ENCODE measurements at regions of chr1 and their contacts with region 1.

Region 1: DNA sequence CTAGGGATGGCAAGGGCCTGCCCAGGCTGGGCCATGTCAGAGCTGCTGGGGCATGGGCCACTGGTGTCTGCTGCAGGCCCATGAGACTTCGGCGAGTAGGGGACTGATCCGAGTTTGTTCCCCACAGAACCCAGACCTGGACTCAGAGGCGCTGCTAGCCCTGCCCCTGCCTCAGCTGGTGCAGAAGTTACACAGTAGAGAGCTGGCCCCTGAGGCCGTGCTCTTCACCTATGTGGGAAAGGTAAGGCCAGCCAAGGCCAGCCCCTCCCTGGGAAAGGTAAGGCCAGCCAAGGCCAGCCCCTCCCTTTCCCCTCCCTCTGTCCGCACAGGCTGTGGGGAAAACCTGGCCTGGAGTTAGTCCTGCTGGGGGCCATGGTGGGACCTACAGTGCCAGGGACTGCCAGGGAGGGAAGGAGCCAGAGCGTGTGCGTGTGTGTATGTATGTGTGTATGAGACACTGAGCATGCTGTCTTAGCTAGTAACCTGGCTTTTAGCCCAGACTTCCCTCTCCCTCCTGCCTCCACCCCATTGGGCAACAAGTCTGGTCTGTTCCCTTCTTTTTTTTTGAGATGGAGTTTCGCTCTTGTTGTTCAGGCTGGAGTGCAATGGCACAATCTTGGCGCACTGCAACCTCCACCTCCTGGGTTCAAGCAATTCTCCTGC is 8.0 kb downstream of the FAAH start:
- DNase-seq: peak in 1 of 2 experiments; percentile 85
- H3K4me3 ChIP-seq: no peak overlapping the region
- H3K27ac ChIP-seq: no peak overlapping the region
- H3K4me1 ChIP-seq: peaks cover 9 to 22% (median 17%) of the 10 kb centered on the region in 4 experiments
- H3K27me3 ChIP-seq: no peaks in the 10 kb centered on the region
- CTCF ChIP-seq: no peak
- EP300 ChIP-seq: no peak
- POLR2A ChIP-seq: no peak
- RAD21 ChIP-seq: no peak

Region 2: DNA sequence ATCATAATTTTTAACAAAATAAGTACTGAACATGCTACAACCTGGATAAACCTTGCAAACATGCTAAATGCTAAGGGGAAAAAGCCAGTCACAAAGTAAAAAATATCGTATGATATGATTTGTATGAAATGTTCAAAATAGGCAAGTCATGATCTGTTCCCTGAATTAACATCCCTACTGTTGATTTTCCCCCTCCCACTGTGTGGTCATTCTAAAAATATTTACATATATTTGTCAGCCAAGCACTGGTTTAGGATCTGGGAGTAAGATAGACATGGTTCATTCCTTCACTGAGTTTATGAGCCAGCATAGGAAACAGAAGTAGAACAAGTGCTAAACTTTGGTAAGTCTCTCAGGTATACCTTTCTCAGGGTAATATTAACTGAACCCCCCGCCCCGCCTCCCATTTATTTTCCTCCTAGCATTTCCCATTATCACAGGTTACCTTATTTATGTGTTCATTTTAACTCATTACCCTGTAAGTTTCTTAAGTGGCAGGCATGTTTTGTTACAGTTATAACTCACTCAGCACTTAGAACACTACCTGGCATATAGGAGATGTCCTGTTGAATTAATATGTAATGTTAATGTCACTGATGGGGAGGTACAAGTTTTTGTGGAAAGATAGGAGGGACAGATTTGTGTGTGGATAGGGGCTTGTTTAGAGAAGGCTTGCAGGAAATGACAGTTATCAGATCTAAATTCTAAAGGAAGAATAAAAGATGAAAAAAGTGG is 86.3 kb before region 1 on chr1:
- CTCF ChIA-PET with region 1: no interaction called
- POLR2A ChIA-PET with region 1: no interaction called
- DNase-seq: no peak
- H3K4me3 ChIP-seq: no peak overlapping the region
- H3K27ac ChIP-seq: no peak overlapping the region
- H3K4me1 ChIP-seq: no peaks in the 10 kb centered on the region
- H3K27me3 ChIP-seq: no peaks in the 10 kb centered on the region
- CTCF ChIP-seq: no peak
- EP300 ChIP-seq: no peak
- POLR2A ChIP-seq: peak in 1 of 2 experiments; percentile 30; a peak in 1 of 3 replicates
- RAD21 ChIP-seq: no peak

Region 3: GRCh38 chr1:46333300-46334029 is 68.6 kb before region 1 on chr1:
- CTCF ChIA-PET with region 1: no interaction called
- POLR2A ChIA-PET with region 1: no interaction called
- DNase-seq: peak in 1 of 2 experiments; percentile 34
- H3K4me3 ChIP-seq: no peak overlapping the region
- H3K27ac ChIP-seq: no peak overlapping the region
- H3K4me1 ChIP-seq: peaks cover 0 to 3% (median 0%) of the 10 kb centered on the region in 4 experiments; a peak in 1 of 7 replicates
- H3K27me3 ChIP-seq: no peaks in the 10 kb centered on the region
- CTCF ChIP-seq: peak in 2 of 3 experiments; percentile 50 to 55; a peak in 3 of 4 replicates
- EP300 ChIP-seq: no peak
- POLR2A ChIP-seq: no peak
- RAD21 ChIP-seq: peak; percentile 56 to 65

Region 4: GRCh38 chr1:46413596-46413985 is 11.5 kb after region 1 on chr1:
- CTCF ChIA-PET with region 1: interaction called, 513 read pairs
- POLR2A ChIA-PET with region 1: interaction called, 19 read pairs
- DNase-seq: peak in 1 of 2 experiments; percentile 70
- H3K4me3 ChIP-seq: no peak overlapping the region
- H3K27ac ChIP-seq: no peak overlapping the region
- H3K4me1 ChIP-seq: peaks cover 0 to 5% (median 2%) of the 10 kb centered on the region in 4 experiments; a peak in 1 of 7 replicates
- H3K27me3 ChIP-seq: no peaks in the 10 kb centered on the region
- CTCF ChIP-seq: peak in 2 of 3 experiments; percentile 59 to 70; a peak in 3 of 4 replicates
- EP300 ChIP-seq: no peak
- POLR2A ChIP-seq: no peak
- RAD21 ChIP-seq: peak; percentile 7 to 29; a peak in 3 of 4 replicates

Region 5: GRCh38 chr1:46418976-46419375 is 16.9 kb after region 1 on chr1:
- CTCF ChIA-PET with region 1: interaction called, 513 read pairs
- POLR2A ChIA-PET with region 1: interaction called, 19 read pairs
- DNase-seq: no peak
- H3K4me3 ChIP-seq: no peak overlapping the region
- H3K27ac ChIP-seq: no peak overlapping the region
- H3K4me1 ChIP-seq: no peaks in the 10 kb centered on the region
- H3K27me3 ChIP-seq: no peaks in the 10 kb centered on the region; a peak in 1 of 7 replicates
- CTCF ChIP-seq: no peak
- EP300 ChIP-seq: no peak
- POLR2A ChIP-seq: no peak
- RAD21 ChIP-seq: no peak

Measured in H1 (cell line).